ENCODE measurements at regions of chr14 and their contacts with region 1.

Region 1: DNA sequence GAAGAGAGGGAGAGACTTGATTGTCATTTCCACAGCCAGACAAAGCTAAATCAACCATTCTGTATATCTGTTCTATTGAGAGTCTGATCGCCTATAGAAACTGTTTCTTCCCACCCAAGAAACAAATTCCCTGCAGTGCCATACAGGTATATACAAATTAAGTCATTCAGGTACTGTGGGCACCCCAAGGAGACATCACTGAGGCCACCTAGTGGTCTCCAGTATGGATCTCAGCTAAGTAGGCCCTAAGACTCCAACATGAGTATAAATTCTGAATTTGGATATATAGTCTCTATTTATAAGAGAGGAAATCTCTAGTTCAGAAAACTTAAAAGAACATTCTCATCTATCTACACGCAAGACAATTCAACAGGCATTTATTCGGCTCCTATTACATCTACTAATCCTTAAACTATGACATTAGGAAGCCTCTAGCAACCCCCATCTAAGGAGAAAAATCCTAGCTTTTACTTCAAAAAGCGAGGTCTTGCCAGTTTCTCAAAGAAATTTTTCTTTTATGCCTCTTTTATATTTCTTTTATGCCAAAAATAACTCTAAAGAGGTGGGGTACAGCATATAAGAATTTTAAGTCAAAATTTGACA is 62.6 kb downstream of the DCAF5 start:
- DNase-seq: no peak
- ATAC-seq: peak; percentile 51
- H3K4me3 Mint-ChIP-seq: no peak overlapping the region
- H3K27ac Mint-ChIP-seq: no peak overlapping the region
- H3K4me1 Mint-ChIP-seq: peaks cover 17% of the 10 kb centered on the region
- H3K27me3 Mint-ChIP-seq: no peaks in the 10 kb centered on the region

Region 2: DNA sequence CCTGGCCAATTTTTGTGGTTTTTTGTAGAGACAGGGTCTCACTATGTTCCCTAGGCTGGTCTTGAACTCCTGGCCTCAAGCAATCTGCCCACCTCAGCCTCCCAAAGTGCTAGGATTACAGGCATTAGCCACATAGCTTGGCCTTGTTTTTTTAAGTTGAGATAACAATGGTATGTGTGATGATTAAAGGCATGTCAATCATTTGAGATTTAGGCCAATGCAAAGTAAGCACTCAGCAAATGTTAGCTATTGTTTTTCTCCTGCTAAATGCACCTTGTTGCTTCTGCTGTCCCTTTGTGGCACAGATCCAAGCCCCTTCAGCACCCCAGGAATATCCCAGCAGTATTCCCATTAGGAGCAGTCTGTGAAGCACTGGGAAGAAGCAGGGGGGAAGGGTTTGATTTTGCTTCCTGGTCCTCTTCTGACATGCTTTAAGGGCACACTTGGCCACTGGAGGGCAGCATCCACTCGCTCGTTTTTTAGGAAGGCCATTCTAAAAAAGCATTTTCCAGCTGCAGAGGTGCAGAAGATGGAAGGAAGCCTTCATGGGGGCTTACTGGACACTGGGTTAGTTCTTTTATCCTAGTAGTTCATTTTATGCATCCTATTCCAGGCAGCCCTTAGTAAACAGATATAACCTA is 227.2 kb before region 1 on chr14:
- CTCF ChIA-PET with region 1: interaction called, 32 read pairs
- DNase-seq: peak; percentile 82
- ATAC-seq: peak; percentile 36
- H3K4me3 Mint-ChIP-seq: no peak overlapping the region
- H3K27ac Mint-ChIP-seq: no peak overlapping the region
- H3K4me1 Mint-ChIP-seq: no peaks in the 10 kb centered on the region
- H3K27me3 Mint-ChIP-seq: no peaks in the 10 kb centered on the region

Region 3: GRCh38 chr14:69039288-69039628 is 51.0 kb before region 1 on chr14:
- CTCF ChIA-PET with region 1: no interaction called
- DNase-seq: no peak
- ATAC-seq: no peak
- H3K4me3 Mint-ChIP-seq: no peak overlapping the region
- H3K27ac Mint-ChIP-seq: no peak overlapping the region
- H3K4me1 Mint-ChIP-seq: peaks cover 3% of the 10 kb centered on the region
- H3K27me3 Mint-ChIP-seq: peaks cover 64% of the 10 kb centered on the region

Region 4: DNA sequence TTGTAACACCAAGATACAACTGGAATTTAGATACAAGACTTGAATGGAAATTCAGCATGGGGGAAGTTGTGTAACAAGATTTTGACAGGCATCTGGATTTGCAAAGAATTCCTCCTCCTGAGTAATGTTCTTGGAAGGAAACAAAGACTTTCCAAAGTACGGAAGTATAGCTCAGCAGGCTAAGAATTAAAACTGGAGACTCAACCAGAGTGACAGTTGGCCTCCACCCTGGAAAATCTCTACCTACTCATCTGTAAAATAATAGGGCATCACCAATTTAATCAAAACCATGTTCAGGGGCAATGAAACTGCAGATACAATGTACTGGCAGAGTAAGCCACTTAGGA is 47.9 kb after region 1 on chr14:
- CTCF ChIA-PET with region 1: no interaction called
- DNase-seq: no peak
- ATAC-seq: no peak
- H3K4me3 Mint-ChIP-seq: no peak overlapping the region
- H3K27ac Mint-ChIP-seq: no peak overlapping the region
- H3K4me1 Mint-ChIP-seq: peaks cover 20% of the 10 kb centered on the region
- H3K27me3 Mint-ChIP-seq: no peaks in the 10 kb centered on the region